ENCODE measurements at regions of chr11 and their contacts with region 1.

Region 1: DNA sequence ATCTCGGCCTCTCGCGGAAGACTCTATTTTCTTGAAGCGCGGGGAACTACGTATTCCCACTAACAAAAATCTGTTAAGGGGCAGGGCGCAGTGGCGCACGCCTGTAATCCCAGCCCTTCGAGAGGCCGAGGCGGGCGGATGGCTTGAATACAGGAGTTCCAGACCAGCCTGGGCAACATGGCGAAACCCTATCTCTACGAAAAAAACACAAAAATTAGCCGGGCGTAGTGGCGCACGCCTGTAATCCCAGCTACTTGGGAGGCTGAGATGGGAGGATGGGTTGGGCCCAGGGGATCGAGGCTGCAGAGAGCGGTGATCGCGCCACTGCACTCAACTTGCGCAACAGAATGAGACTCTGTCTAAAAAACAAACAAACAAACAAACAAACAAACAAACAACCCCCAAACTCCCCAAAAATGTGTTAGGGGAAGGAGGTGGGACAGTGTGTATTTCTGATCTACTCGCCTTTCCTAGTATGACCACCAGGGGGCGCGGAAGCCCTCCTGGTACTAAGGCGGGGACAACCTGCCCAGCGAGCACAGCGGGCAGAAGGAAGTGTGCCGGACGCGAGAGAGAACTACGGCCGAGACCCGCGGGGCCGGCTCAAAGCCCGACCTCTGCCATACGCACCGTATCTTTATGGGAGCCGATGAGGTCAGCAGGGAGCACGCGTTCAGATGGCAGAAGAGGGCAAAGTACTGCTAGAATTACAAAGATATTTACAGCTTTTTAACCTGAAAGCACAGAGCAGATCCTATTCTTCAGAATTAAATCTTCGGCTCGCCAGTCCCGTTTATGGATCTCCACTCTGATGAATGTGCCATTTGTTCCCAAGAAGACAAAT is 1.3 kb upstream of the STX3 start:
- DNase-seq: peak; percentile 85
- ATAC-seq: peak; percentile 62
- H3K4me3 Mint-ChIP-seq: peak overlapping the region; percentile 100
- H3K27ac Mint-ChIP-seq: peak overlapping the region; percentile 96
- H3K4me1 Mint-ChIP-seq: peaks cover 34% of the 10 kb centered on the region
- H3K27me3 Mint-ChIP-seq: peaks cover 2% of the 10 kb centered on the region

Region 2: GRCh38 chr11:59668950-59669610 is 84.8 kb before region 1 on chr11 and contains the start of gene PATL1:
- POLR2A ChIA-PET with region 1: interaction called, 15 read pairs
- DNase-seq: peak; percentile 97
- ATAC-seq: peak; percentile 95
- H3K4me3 Mint-ChIP-seq: peak within 1 kb of the TSS; percentile 97
- H3K27ac Mint-ChIP-seq: peak within 1 kb of the TSS; percentile 99
- H3K4me1 Mint-ChIP-seq: peaks cover 32% of the 10 kb centered on the region
- H3K27me3 Mint-ChIP-seq: no peaks in the 10 kb centered on the region
- total RNA-seq, gene PATL1: 52.9 to 54.1 TPM

Region 3: DNA sequence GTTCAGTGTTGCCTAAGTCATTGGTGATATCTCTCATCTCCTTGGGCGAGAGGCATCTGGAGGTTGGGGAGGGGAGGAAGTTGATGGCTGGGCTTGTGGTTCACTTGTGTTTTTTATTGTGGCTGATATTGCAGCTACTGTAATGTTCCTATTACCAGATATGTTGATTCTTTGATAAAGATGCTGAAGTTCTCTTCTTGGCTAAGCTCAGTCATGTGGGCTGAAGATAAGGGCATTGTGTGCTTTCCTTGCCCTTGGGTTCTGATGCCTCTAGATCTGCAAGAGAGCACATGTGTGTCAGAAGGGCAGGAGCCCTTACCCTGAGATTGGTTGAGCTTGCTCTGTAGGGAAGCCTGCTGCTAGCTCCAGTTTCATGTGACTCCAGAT is 13.3 kb after region 1 on chr11:
- POLR2A ChIA-PET with region 1: interaction called, 102 read pairs
- DNase-seq: peak; percentile 55
- ATAC-seq: peak; percentile 81
- H3K4me3 Mint-ChIP-seq: no peak overlapping the region
- H3K27ac Mint-ChIP-seq: no peak overlapping the region
- H3K4me1 Mint-ChIP-seq: peaks cover 30% of the 10 kb centered on the region
- H3K27me3 Mint-ChIP-seq: no peaks in the 10 kb centered on the region

Region 4: GRCh38 chr11:59776210-59777066 is 22.6 kb after region 1 on chr11:
- POLR2A ChIA-PET with region 1: interaction called, 102 read pairs
- DNase-seq: no peak
- ATAC-seq: peak; percentile 16
- H3K4me3 Mint-ChIP-seq: no peak overlapping the region
- H3K27ac Mint-ChIP-seq: peak overlapping the region; percentile 56
- H3K4me1 Mint-ChIP-seq: peaks cover 68% of the 10 kb centered on the region
- H3K27me3 Mint-ChIP-seq: no peaks in the 10 kb centered on the region

Region 5: GRCh38 chr11:59787816-59788215 is 33.9 kb after region 1 on chr11:
- POLR2A ChIA-PET with region 1: interaction called, 73 read pairs
- DNase-seq: no peak
- ATAC-seq: no peak
- H3K4me3 Mint-ChIP-seq: no peak overlapping the region
- H3K27ac Mint-ChIP-seq: peak overlapping the region; percentile 7
- H3K4me1 Mint-ChIP-seq: peaks cover 45% of the 10 kb centered on the region
- H3K27me3 Mint-ChIP-seq: no peaks in the 10 kb centered on the region

Region 6: DNA sequence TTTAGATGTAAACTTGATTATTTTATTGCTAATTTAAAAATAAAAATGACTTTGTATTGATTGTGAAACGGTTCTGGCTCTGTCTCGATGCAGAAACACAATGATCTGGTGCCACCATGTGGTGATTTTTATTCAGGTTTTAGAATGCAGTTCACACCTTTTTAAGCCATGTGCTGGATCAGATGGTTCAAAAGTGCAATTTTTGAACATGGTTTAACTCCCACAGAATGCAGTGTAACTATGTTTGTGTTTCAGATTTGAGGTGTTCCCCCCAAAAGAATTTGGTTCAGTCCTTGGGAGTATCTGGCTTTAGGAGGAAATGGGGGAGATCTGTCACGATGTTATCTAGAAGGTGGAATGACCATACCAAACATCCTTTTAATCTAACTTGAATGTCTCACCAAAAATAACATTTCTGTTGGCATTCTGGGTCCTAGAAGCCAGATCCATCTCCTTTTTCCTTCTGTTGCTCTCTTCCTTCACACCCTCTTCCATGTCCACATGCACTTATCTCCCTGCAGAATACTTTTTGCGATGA is 48.8 kb after region 1 on chr11:
- POLR2A ChIA-PET with region 1: interaction called, 50 read pairs
- DNase-seq: no peak
- ATAC-seq: peak; percentile 76
- H3K4me3 Mint-ChIP-seq: no peak overlapping the region
- H3K27ac Mint-ChIP-seq: peak overlapping the region; percentile 65
- H3K4me1 Mint-ChIP-seq: peaks cover 34% of the 10 kb centered on the region
- H3K27me3 Mint-ChIP-seq: no peaks in the 10 kb centered on the region

Region 7: GRCh38 chr11:59810189-59810910 is 56.5 kb after region 1 on chr11 and contains the start of gene MRPL16:
- POLR2A ChIA-PET with region 1: interaction called, 42 read pairs
- DNase-seq: peak; percentile 88
- ATAC-seq: peak; percentile 98
- H3K4me3 Mint-ChIP-seq: peak within 1 kb of the TSS; percentile 94
- H3K27ac Mint-ChIP-seq: peak within 1 kb of the TSS; percentile 93
- H3K4me1 Mint-ChIP-seq: peaks cover 27% of the 10 kb centered on the region
- H3K27me3 Mint-ChIP-seq: no peaks in the 10 kb centered on the region
- total RNA-seq, gene MRPL16: 67.2 to 70.0 TPM

Region 8: GRCh38 chr11:59857444-59858434 is 103.9 kb after region 1 on chr11:
- POLR2A ChIA-PET with region 1: no interaction called
- DNase-seq: no peak
- ATAC-seq: peak; percentile 47
- H3K4me3 Mint-ChIP-seq: no peak overlapping the region
- H3K27ac Mint-ChIP-seq: peak overlapping the region; percentile 0
- H3K4me1 Mint-ChIP-seq: peaks cover 10% of the 10 kb centered on the region
- H3K27me3 Mint-ChIP-seq: peaks cover 12% of the 10 kb centered on the region